ENCODE measurements at regions of chr4 and their contacts with region 1.

Region 1: GRCh38 chr4:153785910-153786721 is 2.8 kb downstream of the SFRP2 start:
- DNase-seq: no peak
- H3K4me3 ChIP-seq: no peak overlapping the region
- H3K27ac ChIP-seq: no peak overlapping the region
- H3K4me1 ChIP-seq: 0 out of 2 replicates have a peak, but pooled peaks cover 8% of the 10 kb centered on the region
- H3K27me3 ChIP-seq: no peaks in the 10 kb centered on the region
- CTCF ChIP-seq: peak; percentile 53; the same call in 1 of the 2 replicates

Region 2: DNA sequence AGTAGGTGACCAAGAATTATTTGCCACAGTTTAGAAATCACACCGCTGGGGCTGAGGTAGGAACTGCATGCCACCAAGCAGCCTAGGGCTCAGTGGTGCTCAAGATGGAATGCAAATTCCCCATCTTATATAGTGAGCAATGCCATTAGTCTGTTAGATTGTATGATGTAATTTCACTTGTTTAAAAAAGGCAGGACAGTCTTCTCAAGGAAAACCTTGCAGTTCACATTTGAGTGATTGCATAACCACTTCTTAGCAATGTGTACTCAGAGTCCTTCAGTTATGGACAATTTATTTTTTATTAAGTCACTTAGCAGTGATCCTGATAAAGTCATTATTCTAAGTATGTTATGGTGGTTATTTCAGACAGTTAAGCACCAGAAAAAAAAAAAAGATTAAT is 145.7 kb after region 1 on chr4:
- CTCF ChIA-PET with region 1: interaction called, 12 read pairs
- POLR2A ChIA-PET with region 1: no interaction called
- intact Hi-C with region 1: no loop called
- DNase-seq: peak in 1 of 2 experiments; percentile 34
- H3K4me3 ChIP-seq: no peak overlapping the region
- H3K27ac ChIP-seq: no peak overlapping the region
- H3K4me1 ChIP-seq: no peaks in the 10 kb centered on the region
- H3K27me3 ChIP-seq: no peaks in the 10 kb centered on the region
- CTCF ChIP-seq: no peak

Region 3: DNA sequence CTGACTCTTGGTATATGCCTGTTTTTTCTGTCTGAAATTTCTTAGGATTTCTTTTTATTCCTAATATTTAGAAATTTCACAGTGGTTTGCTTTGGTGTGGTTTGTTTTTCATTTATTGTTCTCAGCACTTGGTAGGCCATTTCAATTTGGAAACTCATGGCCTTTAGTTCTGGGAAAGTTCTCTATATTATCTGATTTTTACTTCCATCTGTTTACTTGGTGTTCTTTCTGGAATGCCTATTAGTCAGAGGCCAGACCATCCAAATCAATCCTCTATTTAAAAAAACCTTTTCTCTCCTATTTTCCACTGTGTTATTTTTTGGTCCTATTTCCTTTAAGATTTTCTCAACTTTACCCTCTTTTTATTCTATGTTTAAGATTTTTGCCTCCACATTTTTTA is 190.8 kb after region 1 on chr4:
- CTCF ChIA-PET with region 1: no interaction called
- POLR2A ChIA-PET with region 1: no interaction called
- intact Hi-C with region 1: no loop called
- DNase-seq: no peak
- H3K4me3 ChIP-seq: no peak overlapping the region
- H3K27ac ChIP-seq: no peak overlapping the region
- H3K4me1 ChIP-seq: no peaks in the 10 kb centered on the region
- H3K27me3 ChIP-seq: no peaks in the 10 kb centered on the region
- CTCF ChIP-seq: no peak

Region 4: GRCh38 chr4:154314248-154314647 is 528.1 kb after region 1 on chr4:
- CTCF ChIA-PET with region 1: no interaction called
- POLR2A ChIA-PET with region 1: no interaction called
- intact Hi-C with region 1: loop called (anchors 5 kb)
- DNase-seq: no peak
- H3K4me3 ChIP-seq: no peak overlapping the region
- H3K27ac ChIP-seq: no peak overlapping the region
- H3K4me1 ChIP-seq: no peaks in the 10 kb centered on the region
- H3K27me3 ChIP-seq: no peaks in the 10 kb centered on the region
- CTCF ChIP-seq: no peak

Region 5: GRCh38 chr4:154529728-154530519 is 743.8 kb after region 1 on chr4:
- CTCF ChIA-PET with region 1: interaction called, 12 read pairs
- POLR2A ChIA-PET with region 1: no interaction called
- intact Hi-C with region 1: no loop called
- DNase-seq: no peak
- H3K4me3 ChIP-seq: no peak overlapping the region
- H3K27ac ChIP-seq: no peak overlapping the region
- H3K4me1 ChIP-seq: no peaks in the 10 kb centered on the region
- H3K27me3 ChIP-seq: no peaks in the 10 kb centered on the region
- CTCF ChIP-seq: no peak